ENCODE measurements at regions of chr19 and their contacts with region 1.

Region 1: GRCh38 chr19:4267101-4267900 is 11.8 kb upstream of the SHD start:
- DNase-seq: peak; percentile 43 to 76 (median 71)
- H3K4me3 ChIP-seq: no peak overlapping the region
- H3K27ac ChIP-seq: no peak overlapping the region
- H3K4me1 ChIP-seq: peaks cover 0 to 18% (median 14%) of the 10 kb centered on the region in 4 experiments
- H3K27me3 ChIP-seq: no peaks in the 10 kb centered on the region

Region 2: DNA sequence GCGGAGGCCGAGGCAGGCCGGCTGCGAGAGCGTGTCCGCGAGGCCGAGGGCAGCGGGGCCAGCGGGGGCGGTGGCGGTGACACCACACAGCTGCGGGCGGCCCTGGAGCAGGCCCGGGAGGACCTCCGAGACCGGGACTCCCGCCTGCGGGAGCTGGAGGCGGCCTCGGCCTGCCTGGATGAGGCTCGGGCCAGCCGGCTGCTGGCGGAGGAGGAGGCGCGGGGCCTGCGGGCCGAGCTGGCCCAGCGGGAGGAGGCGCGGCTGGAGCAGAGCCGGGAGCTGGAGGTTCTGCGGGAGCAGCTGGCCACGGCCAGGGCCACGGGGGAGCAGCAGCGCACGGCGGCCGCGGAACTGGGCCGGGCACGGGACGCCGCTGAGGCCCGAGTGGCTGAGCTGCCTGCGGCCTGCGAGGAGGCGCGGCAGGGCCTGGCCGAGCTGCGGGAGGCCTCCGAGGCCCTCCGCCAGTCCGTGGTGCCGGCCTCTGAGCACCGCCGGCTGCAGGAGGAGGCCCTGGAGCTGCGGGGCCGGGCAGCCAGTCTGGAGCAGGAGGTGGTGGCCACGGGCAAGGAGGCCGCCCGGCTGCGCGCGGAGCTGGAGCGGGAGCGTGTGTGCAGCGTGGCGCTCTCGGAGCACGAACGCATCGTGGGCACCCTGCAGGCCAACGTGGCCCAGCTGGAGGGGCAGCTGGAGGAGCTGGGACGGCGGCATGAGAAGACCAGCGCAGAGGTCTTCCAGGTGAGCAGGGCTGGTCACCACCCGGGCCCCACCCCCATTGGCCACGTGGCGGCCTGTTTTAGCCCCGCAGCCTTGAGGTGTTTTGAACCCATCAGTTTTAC is 49.7 kb before region 1 on chr19:
- CTCF ChIA-PET with region 1: no interaction called
- POLR2A ChIA-PET with region 1: no interaction called
- DNase-seq: no peak
- H3K4me3 ChIP-seq: no peak overlapping the region
- H3K27ac ChIP-seq: no peak overlapping the region
- H3K4me1 ChIP-seq: no peaks in the 10 kb centered on the region
- H3K27me3 ChIP-seq: no peaks in the 10 kb centered on the region

Region 3: GRCh38 chr19:4322942-4323665 is 55.8 kb after region 1 on chr19:
- CTCF ChIA-PET with region 1: interaction called, 12 read pairs
- POLR2A ChIA-PET with region 1: no interaction called
- DNase-seq: no peak
- H3K4me3 ChIP-seq: no peak overlapping the region
- H3K27ac ChIP-seq: no peak overlapping the region
- H3K4me1 ChIP-seq: peaks cover 0 to 22% (median 18%) of the 10 kb centered on the region in 4 experiments
- H3K27me3 ChIP-seq: peaks cover 0 to 20% (median 7%) of the 10 kb centered on the region in 5 experiments

Region 4: GRCh38 chr19:4342615-4343369 is 75.5 kb after region 1 on chr19:
- CTCF ChIA-PET with region 1: interaction called, 21 read pairs
- POLR2A ChIA-PET with region 1: interaction called, 5 read pairs
- DNase-seq: peak; percentile 100
- H3K4me3 ChIP-seq: peak overlapping the region; percentile 47 to 85 (median 75)
- H3K27ac ChIP-seq: peak overlapping the region; percentile 60 to 73
- H3K4me1 ChIP-seq: peaks cover 0 to 32% (median 31%) of the 10 kb centered on the region in 4 experiments
- H3K27me3 ChIP-seq: no peaks in the 10 kb centered on the region